Left ventricle myocardium inferior (tissue), 1 donor: ENCODE measurements at regions of chr7 and their contacts with region 1.

Region 1: GRCh38 chr7:51162724-51163329 is 153.8 kb downstream of the COBL start:
- DNase-seq: no peak
- H3K4me3 ChIP-seq: no peak overlapping the region
- H3K27ac ChIP-seq: no peak overlapping the region
- H3K4me1 ChIP-seq: peaks cover 15% of the 10 kb centered on the region
- H3K27me3 ChIP-seq: no peaks in the 10 kb centered on the region
- CTCF ChIP-seq: peak; percentile 90

Region 2: GRCh38 chr7:50467817-50468610 is 694.8 kb before region 1 on chr7:
- intact Hi-C with region 1: loop called (anchors 5 kb)
- DNase-seq: peak; percentile 81
- H3K4me3 ChIP-seq: no peak overlapping the region
- H3K27ac ChIP-seq: no peak overlapping the region
- H3K4me1 ChIP-seq: peaks cover 6% of the 10 kb centered on the region
- H3K27me3 ChIP-seq: peaks cover 6% of the 10 kb centered on the region
- CTCF ChIP-seq: peak; percentile 95

Region 3: GRCh38 chr7:51366930-51367613 is 204.2 kb after region 1 on chr7:
- intact Hi-C with region 1: loop called (anchors 5 kb)
- DNase-seq: no peak
- H3K4me3 ChIP-seq: no peak overlapping the region
- H3K27ac ChIP-seq: no peak overlapping the region
- H3K4me1 ChIP-seq: peaks cover 4% of the 10 kb centered on the region
- H3K27me3 ChIP-seq: no peaks in the 10 kb centered on the region
- CTCF ChIP-seq: peak; percentile 76